HepG2 (cell line): ENCODE measurements at regions of chr17 and their contacts with region 1.

Region 1: DNA sequence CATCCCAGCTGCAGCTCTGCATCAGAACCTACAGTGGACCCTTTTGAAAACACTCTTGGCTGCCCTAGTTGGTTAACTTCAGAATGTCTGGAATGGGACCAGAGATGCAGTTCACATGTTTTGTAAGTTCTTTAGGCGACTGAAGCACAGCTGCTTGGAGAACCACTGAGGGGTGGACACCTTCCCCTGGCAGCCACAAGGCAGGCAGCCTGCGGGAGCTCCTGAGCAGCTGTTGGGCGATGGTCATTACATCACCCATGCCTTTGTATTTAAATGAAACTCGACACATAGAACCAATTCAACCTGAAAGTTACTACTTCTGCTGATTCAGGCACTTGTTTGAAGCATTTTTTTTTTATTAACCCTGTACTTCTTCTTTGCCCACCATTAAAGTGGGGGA is 151.5 kb downstream of the LGALS9B start:
- DNase-seq: no peak
- ATAC-seq: no peak
- H3K4me3 ChIP-seq: no peak overlapping the region
- H3K27ac ChIP-seq: no peak overlapping the region
- H3K4me1 ChIP-seq: no peaks in the 10 kb centered on the region
- H3K27me3 ChIP-seq: no peaks in the 10 kb centered on the region
- CTCF ChIP-seq: no peak
- EP300 ChIP-seq: no peak
- POLR2A ChIP-seq: no peak
- RAD21 ChIP-seq: no peak

Region 2: GRCh38 chr17:20121359-20122253 is 194.2 kb before region 1 on chr17:
- CTCF ChIA-PET with region 1: interaction called, 18 read pairs
- POLR2A ChIA-PET with region 1: no interaction called
- in situ Hi-C with region 1: loop called (anchors 10 kb)
- intact Hi-C with region 1: no loop called
- DNase-seq: peak; percentile 50
- ATAC-seq: peak; percentile 86
- H3K4me3 ChIP-seq: no peak overlapping the region
- H3K27ac ChIP-seq: no peak overlapping the region
- H3K4me1 ChIP-seq: no peaks in the 10 kb centered on the region
- H3K27me3 ChIP-seq: no peaks in the 10 kb centered on the region; a peak in 1 of 5 replicates
- CTCF ChIP-seq: peak; percentile 83
- EP300 ChIP-seq: no peak
- POLR2A ChIP-seq: no peak
- RAD21 ChIP-seq: peak; percentile 55; the same call in 1 of the 2 replicates

Region 3: GRCh38 chr17:20226814-20227482 is 88.9 kb before region 1 on chr17:
- CTCF ChIA-PET with region 1: interaction called, 28 read pairs
- POLR2A ChIA-PET with region 1: no interaction called
- in situ Hi-C with region 1: loop called (anchors 10 kb)
- intact Hi-C with region 1: loop called (anchors 2 kb)
- DNase-seq: peak; percentile 50
- ATAC-seq: peak; percentile 100
- H3K4me3 ChIP-seq: no peak overlapping the region
- H3K27ac ChIP-seq: no peak overlapping the region
- H3K4me1 ChIP-seq: no peaks in the 10 kb centered on the region
- H3K27me3 ChIP-seq: no peaks in the 10 kb centered on the region
- CTCF ChIP-seq: peak; percentile 94
- EP300 ChIP-seq: no peak
- POLR2A ChIP-seq: no peak
- RAD21 ChIP-seq: peak; percentile 86